Activated CD4-positive, alpha-beta memory T cell treated with anti-CD3 and anti-CD28 coated beads, Interleukin-2, amount 10 ng/mL, durations not matched to agents 7 days and 5 days (primary cell): ENCODE measurements at regions of chr6 and their contacts with region 1.

Region 1: GRCh38 chr6:43369174-43370022 is at the start of gene ZNF318:
- DNase-seq: peak; percentile 95
- H3K4me3 Mint-ChIP-seq: peak within 1 kb of the TSS; percentile 84
- H3K27ac Mint-ChIP-seq: peak within 1 kb of the TSS; percentile 90
- H3K4me1 Mint-ChIP-seq: peaks cover 27% of the 10 kb centered on the region
- H3K27me3 Mint-ChIP-seq: peaks cover 3% of the 10 kb centered on the region
- total RNA-seq, gene ZNF318: 16.2 to 16.9 TPM

Region 2: DNA sequence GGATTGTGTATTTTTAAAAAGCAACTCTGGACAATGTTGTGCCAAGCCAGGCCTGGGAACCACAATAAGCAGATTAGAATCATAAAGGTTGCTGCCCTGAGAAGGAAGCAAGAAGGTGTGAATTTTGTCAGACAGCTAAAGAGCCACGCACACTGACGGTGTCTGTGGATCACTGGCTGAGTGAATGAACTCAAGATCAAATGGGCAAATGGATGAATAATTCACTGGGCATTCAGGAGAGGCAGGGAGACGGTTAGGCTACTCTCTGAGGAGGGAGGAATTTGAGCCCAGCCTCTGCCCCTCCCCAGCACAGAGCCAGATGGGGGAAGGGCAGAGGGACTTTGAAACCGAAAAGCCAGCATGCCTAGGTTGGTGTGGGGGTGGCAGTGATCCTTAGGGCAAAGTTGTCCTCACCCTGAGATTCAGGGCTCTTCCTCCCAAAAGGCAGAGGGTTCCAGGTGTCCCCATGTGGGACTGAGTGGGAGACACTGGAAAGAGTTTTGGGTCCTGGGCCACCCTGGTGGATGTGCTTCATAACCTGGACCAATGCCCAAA is 90.8 kb before region 1 on chr6:
- CTCF ChIA-PET with region 1: no interaction called
- POLR2A ChIA-PET with region 1: no interaction called
- DNase-seq: no peak
- H3K4me3 Mint-ChIP-seq: no peak overlapping the region
- H3K27ac Mint-ChIP-seq: no peak overlapping the region
- H3K4me1 Mint-ChIP-seq: peaks cover 19% of the 10 kb centered on the region
- H3K27me3 Mint-ChIP-seq: peaks cover 47% of the 10 kb centered on the region

Region 3: DNA sequence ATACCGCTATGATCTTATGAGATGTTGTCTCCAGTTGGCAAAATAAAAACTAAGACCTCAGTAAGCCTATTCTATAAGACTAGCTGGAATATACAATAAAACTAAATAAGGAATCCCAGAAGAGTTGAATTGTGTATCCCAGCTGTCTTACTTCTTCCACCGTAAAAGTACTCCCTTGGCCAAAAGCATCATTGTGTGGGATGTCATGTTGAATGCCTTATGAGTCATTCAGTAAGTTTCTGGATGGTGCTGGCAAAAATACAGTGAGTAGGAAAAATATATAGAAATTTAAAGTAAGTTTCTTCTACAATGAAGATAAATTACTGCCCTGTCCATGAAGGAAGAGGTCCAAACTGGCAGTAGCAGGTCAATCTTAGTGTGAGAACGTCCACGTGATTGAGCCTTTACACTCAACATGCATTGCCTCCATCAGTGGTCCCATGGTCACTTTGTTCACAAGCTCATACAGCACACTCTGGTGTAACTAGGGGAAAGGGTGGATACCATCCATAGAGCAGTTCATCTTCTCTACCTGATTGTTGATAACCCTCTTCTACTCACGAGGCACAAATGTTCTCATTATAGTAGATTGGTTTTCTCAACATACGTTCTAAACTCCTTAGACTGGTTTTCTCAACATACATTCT is 13.7 kb after region 1 on chr6:
- CTCF ChIA-PET with region 1: interaction called, 24 read pairs
- POLR2A ChIA-PET with region 1: interaction called, 103 read pairs
- DNase-seq: no peak
- H3K4me3 Mint-ChIP-seq: peak overlapping the region; percentile 6
- H3K27ac Mint-ChIP-seq: peak overlapping the region; percentile 91
- H3K4me1 Mint-ChIP-seq: peaks cover 54% of the 10 kb centered on the region
- H3K27me3 Mint-ChIP-seq: peaks cover 26% of the 10 kb centered on the region

Region 4: DNA sequence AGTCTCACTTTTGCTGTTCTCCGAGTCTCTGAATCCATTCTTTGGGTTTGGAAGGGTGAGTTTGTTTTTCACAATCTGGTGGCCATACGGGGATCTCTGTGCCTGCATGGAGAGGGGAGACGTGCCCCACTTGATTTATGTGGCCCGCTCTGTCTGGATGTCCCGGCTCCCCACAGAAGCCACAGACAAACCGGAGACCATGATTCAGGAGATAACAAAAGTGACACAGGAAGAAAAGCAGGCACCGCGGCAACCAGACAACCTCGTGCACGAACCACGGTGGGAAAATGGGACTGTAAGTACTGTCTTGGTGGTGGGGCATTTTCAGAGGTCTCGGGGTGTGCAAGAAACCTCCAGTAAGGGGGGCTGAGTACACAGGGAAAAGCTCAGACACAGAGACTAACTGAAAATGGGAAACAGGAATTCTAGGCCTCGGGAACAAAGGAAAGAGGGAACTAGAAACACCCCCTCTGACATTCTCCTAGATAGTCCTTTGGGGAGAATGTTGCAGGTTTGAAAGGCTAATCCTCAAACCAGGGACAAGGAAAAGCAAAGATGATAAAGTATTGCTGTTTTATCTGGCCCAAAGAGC is 22.1 kb after region 1 on chr6:
- CTCF ChIA-PET with region 1: interaction called, 4 read pairs
- POLR2A ChIA-PET with region 1: interaction called, 14 read pairs
- DNase-seq: peak; percentile 57
- H3K4me3 Mint-ChIP-seq: peak overlapping the region; percentile 31
- H3K27ac Mint-ChIP-seq: no peak overlapping the region
- H3K4me1 Mint-ChIP-seq: peaks cover 24% of the 10 kb centered on the region
- H3K27me3 Mint-ChIP-seq: peaks cover 63% of the 10 kb centered on the region

Region 5: DNA sequence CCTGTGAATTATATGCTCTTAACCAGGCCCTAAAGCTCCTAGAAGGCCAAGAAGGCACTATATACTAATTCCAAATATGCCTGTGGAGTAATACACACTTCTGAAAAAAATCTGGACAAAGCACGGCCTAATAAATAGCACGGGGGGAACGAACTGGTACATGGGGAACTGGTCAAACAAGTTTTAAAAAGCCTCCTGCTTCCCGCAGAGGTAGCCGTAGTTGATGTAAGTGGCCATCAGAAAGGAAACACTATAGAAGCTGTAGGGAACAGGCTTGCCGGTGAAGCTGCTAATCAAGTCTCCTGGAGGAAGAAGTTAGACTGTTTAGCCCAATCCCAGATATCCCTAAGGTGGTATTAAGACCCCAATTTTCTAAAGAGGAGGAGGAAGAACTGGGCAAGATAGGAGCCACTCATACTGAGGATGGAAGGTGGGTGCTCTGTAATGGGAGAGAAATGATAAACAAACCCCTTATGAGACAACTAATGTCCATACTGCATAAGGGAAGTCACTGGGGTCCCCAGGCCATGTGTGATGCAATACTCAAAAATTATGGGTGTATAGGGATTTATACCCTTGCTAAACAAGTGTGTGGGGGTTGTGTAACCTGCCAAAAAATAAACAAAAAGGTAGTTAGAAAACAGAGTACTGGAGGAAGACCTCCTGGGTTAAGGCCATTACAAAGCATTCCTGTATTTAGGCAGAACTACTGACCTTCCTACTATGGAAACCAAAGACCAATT is 27.2 kb after region 1 on chr6:
- CTCF ChIA-PET with region 1: interaction called, 22 read pairs
- POLR2A ChIA-PET with region 1: interaction called, 14 read pairs
- DNase-seq: no peak
- H3K4me3 Mint-ChIP-seq: no peak overlapping the region
- H3K27ac Mint-ChIP-seq: no peak overlapping the region
- H3K4me1 Mint-ChIP-seq: peaks cover 7% of the 10 kb centered on the region
- H3K27me3 Mint-ChIP-seq: peaks cover 40% of the 10 kb centered on the region

Region 6: GRCh38 chr6:43427406-43428111 is 58.2 kb after region 1 on chr6 and contains the start of gene ABCC10:
- CTCF ChIA-PET with region 1: interaction called, 8 read pairs
- POLR2A ChIA-PET with region 1: interaction called, 18 read pairs
- DNase-seq: peak; percentile 96
- H3K4me3 Mint-ChIP-seq: peak within 1 kb of the TSS; percentile 93
- H3K27ac Mint-ChIP-seq: peak within 1 kb of the TSS; percentile 92
- H3K4me1 Mint-ChIP-seq: peaks cover 23% of the 10 kb centered on the region
- H3K27me3 Mint-ChIP-seq: no peaks in the 10 kb centered on the region
- total RNA-seq, gene ABCC10: 46.8 to 49.8 TPM

Region 7: DNA sequence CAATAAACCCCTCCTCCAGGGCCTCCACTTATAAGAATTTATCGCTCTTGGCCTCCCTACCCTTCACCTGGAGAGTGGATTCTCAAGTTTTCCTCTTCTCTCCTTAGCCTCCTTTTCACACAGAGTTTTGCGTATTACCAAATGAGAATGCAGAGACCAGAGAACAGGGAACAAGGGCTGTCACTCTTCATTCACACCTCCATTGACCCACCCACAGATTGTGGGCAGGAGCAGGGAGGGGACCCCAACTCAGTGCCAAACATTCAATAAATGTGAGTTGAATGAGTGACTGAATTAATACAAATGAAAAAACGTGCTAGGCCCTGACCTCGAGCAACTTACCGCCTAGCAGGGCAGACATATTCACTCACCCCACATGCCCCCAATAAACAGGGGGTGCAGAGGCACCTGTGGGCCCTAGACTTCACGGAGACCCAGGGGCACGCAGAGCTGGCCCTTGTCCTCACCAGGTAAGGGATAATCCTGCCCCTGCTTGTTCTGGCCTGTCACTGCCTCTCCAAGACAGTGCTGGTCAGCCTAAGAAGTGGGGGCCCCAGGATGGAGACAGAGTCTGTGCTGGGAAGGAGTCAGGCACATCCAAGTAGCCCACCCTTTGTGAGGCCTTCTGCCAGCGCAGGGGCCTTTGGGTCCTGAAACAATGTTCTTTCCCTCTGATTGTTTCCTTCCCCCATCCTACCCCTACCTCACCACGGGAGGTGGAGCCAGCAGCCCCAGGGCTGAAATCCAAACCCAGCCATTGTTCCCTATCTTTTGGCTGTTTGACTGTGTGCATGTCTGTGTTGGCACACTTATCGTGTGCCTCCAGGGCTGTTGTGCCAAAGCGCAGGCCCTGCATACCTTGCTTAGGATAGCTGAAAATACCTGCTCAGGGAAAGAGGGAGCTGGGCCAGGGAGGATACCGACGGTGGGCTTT is 99.6 kb after region 1 on chr6:
- CTCF ChIA-PET with region 1: no interaction called
- POLR2A ChIA-PET with region 1: no interaction called
- DNase-seq: no peak
- H3K4me3 Mint-ChIP-seq: no peak overlapping the region
- H3K27ac Mint-ChIP-seq: no peak overlapping the region
- H3K4me1 Mint-ChIP-seq: no peaks in the 10 kb centered on the region
- H3K27me3 Mint-ChIP-seq: peaks cover 14% of the 10 kb centered on the region